ENCODE measurements at regions of chr15 and their contacts with region 1.

Region 1: DNA sequence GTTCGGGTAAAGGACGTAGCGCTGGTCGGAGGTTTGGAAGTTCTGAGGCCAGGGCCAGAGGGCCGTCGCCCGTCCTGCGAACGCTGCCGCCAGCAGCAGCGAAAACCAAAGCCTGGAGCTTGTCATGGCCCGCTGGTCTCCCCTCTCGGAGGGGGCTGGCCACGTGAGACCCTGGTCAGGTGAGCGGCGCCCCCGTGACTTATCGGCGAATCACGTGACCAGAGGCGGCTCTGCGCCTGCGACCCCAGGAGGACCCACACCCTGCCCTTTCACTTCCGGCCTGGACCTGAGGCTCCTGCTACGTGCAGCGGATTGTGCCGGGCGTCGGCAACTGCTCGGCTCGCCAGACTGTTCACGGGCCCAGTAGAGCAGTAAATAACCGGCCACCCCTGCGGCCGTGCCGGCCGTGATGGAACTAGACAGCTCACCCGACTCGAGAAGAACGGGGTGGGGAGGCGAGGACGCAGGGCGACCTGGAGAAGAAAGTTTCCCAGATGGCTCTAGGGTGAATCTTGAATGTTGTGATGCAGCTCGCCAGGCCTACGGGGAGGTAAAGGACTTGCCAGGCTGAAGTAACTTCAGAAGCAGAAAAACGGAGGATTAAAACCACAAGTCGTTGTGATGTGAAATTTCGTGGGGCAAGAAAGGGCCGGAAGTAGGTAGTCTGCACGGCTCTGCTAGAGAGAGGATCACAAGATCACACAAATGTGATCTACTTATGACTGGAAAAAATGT is at the start of gene HEXA:
- DNase-seq: peak; percentile 89 to 97 (median 94)
- ATAC-seq: peak; percentile 68
- H3K4me3 ChIP-seq: peak within 1 kb of the TSS; percentile 87
- H3K4me3 Mint-ChIP-seq: peak within 1 kb of the TSS; percentile 94
- H3K27ac ChIP-seq: peak within 1 kb of the TSS; percentile 76 to 86
- H3K27ac Mint-ChIP-seq: peak within 1 kb of the TSS; percentile 96
- H3K4me1 ChIP-seq: peaks cover 28% of the 10 kb centered on the region
- H3K4me1 Mint-ChIP-seq: peaks cover 57% of the 10 kb centered on the region
- H3K27me3 ChIP-seq: no peaks in the 10 kb centered on the region
- H3K27me3 Mint-ChIP-seq: peaks cover 9% of the 10 kb centered on the region
- CTCF ChIP-seq: no peak
- total RNA-seq, gene HEXA: 66.3 to 66.9 TPM

Region 2: GRCh38 chr15:72319985-72320671 is 55.9 kb before region 1 on chr15 and contains the start of gene CELF6:
- CTCF ChIA-PET with region 1: no interaction called
- POLR2A ChIA-PET with region 1: no interaction called
- intact Hi-C with region 1: loop called in 1 of 2 experiments (anchors 5 kb)
- DNase-seq: peak; percentile 32 to 93 (median 64)
- ATAC-seq: peak; percentile 79
- H3K4me3 ChIP-seq: peak within 1 kb of the TSS; percentile 55
- H3K4me3 Mint-ChIP-seq: peak within 1 kb of the TSS; percentile 85
- H3K27ac ChIP-seq: no peak within 1 kb of the TSS
- H3K27ac Mint-ChIP-seq: peak within 1 kb of the TSS; percentile 74
- H3K4me1 ChIP-seq: peaks cover 18% of the 10 kb centered on the region
- H3K4me1 Mint-ChIP-seq: peaks cover 26% of the 10 kb centered on the region
- H3K27me3 ChIP-seq: no peaks in the 10 kb centered on the region
- H3K27me3 Mint-ChIP-seq: no peaks in the 10 kb centered on the region
- CTCF ChIP-seq: no peak
- total RNA-seq, gene CELF6: 2.4 TPM

Region 3: GRCh38 chr15:72365844-72366243 is 10.2 kb before region 1 on chr15:
- CTCF ChIA-PET with region 1: no interaction called
- POLR2A ChIA-PET with region 1: interaction called, 20 read pairs
- intact Hi-C with region 1: no loop called
- DNase-seq: peak in 4 of 14 experiments; percentile 36 to 58 (median 50)
- ATAC-seq: peak; percentile 84
- H3K4me3 ChIP-seq: no peak overlapping the region
- H3K4me3 Mint-ChIP-seq: no peak overlapping the region
- H3K27ac ChIP-seq: no peak overlapping the region
- H3K27ac Mint-ChIP-seq: peak overlapping the region; percentile 7
- H3K4me1 ChIP-seq: peaks cover 18% of the 10 kb centered on the region
- H3K4me1 Mint-ChIP-seq: peaks cover 48% of the 10 kb centered on the region
- H3K27me3 ChIP-seq: no peaks in the 10 kb centered on the region
- H3K27me3 Mint-ChIP-seq: no peaks in the 10 kb centered on the region
- CTCF ChIP-seq: no peak

Region 4: DNA sequence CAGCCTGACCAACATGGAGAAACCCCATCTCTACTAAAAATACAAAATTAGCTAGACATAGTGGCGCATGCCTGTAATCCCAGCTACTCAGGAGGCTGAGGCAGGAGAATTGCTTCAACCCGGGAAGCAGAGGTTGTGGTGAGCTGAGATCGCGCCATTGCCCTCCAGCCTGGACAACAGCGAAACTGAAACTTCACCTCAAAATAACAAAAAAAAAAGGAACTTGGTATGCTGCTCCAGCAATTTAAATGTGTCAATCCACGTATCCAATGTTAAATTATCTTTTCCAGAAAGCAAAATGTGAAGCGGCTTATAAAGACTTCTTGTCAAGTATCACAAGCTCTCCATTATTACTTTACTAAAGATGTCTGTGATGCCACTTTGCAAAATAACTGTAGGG is 88.2 kb after region 1 on chr15:
- CTCF ChIA-PET with region 1: interaction called, 4 read pairs
- POLR2A ChIA-PET with region 1: interaction called, 18 read pairs
- intact Hi-C with region 1: no loop called
- DNase-seq: no peak
- ATAC-seq: no peak
- H3K4me3 ChIP-seq: no peak overlapping the region
- H3K4me3 Mint-ChIP-seq: peak overlapping the region; percentile 7
- H3K27ac ChIP-seq: no peak overlapping the region
- H3K27ac Mint-ChIP-seq: no peak overlapping the region
- H3K4me1 ChIP-seq: peaks cover 9% of the 10 kb centered on the region
- H3K4me1 Mint-ChIP-seq: peaks cover 8% of the 10 kb centered on the region
- H3K27me3 ChIP-seq: no peaks in the 10 kb centered on the region
- H3K27me3 Mint-ChIP-seq: no peaks in the 10 kb centered on the region
- CTCF ChIP-seq: no peak

Region 5: DNA sequence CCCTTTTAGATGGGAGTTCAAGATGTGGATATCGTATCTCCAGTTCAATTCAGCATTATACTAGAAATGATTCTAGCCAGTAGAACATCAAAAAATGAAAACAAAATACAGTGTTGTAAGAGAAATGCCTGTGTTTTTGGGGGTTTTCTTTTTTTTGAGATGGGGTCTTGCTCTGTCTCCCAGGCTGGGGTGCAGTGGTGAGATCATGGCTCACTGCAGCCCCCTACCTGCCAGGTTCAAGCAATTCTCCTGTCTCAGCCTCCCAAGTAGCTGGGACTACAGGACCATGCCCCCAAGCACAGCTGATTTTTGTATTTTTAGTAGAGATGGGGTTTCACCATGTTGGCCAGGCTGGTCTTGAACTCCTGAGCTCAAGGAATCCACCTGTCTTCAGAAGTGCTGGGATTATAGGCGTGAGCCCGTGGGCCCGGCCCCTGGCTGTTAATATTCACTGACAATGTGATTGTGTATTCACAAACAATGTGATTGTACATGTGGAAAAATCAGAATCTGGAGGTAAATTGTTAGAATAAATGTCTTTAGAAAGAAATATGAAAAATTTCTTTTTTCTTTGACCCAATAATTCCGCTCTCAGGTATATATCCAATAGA is 157.1 kb after region 1 on chr15:
- CTCF ChIA-PET with region 1: interaction called, 3 read pairs
- POLR2A ChIA-PET with region 1: interaction called, 6 read pairs
- intact Hi-C with region 1: loop called in 1 of 2 experiments (anchors 10 kb)
- DNase-seq: peak in 9 of 14 experiments; percentile 4 to 61 (median 21)
- ATAC-seq: no peak
- H3K4me3 ChIP-seq: no peak overlapping the region
- H3K4me3 Mint-ChIP-seq: no peak overlapping the region
- H3K27ac ChIP-seq: no peak overlapping the region
- H3K27ac Mint-ChIP-seq: no peak overlapping the region
- H3K4me1 ChIP-seq: peaks cover 19% of the 10 kb centered on the region
- H3K4me1 Mint-ChIP-seq: peaks cover 90% of the 10 kb centered on the region
- H3K27me3 ChIP-seq: no peaks in the 10 kb centered on the region
- H3K27me3 Mint-ChIP-seq: no peaks in the 10 kb centered on the region
- CTCF ChIP-seq: peak; percentile 77